ENCODE measurements at regions of chr2 and their contacts with region 1.

Region 1: GRCh38 chr2:73085691-73086360 is 14.3 kb upstream of the SFXN5 start:
- DNase-seq: peak; percentile 81 to 84
- ATAC-seq: peak; percentile 57 to 84 (median 66)
- H3K4me3 ChIP-seq: no peak overlapping the region
- H3K27ac ChIP-seq: no peak overlapping the region
- H3K4me1 ChIP-seq: peaks cover 0 to 54% (median 20%) of the 10 kb centered on the region in 9 donors
- H3K27me3 ChIP-seq: no peaks in the 10 kb centered on the region
- CTCF ChIP-seq: peak; percentile 82 to 98 (median 94)

Region 2: DNA sequence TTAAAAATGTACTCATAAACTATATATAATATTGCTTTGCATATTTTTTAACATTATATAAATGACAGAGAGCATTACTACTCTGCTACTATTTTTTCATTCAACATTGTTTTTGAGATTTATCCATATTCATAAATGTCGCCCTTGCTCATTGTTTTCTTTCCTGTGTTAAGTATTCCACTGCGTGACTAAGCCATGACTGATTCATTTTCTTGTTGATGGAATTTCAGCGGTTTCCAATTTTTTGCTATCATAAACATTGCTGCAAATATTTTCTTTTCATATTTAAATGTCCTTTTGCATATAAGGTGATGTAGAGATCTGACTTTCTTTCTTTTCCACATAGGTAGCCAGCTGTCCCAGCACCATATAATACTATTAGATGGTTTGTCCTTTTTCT is 71.9 kb before region 1 on chr2:
- intact Hi-C with region 1: no loop called
- DNase-seq: no peak
- ATAC-seq: no peak
- H3K4me3 ChIP-seq: no peak overlapping the region
- H3K27ac ChIP-seq: no peak overlapping the region
- H3K4me1 ChIP-seq: peaks cover 0 to 4% (median 0%) of the 10 kb centered on the region in 9 donors
- H3K27me3 ChIP-seq: no peaks in the 10 kb centered on the region
- CTCF ChIP-seq: no peak

Region 3: GRCh38 chr2:73156539-73157124 is 70.8 kb after region 1 on chr2:
- intact Hi-C with region 1: loop called in 9 of 10 experiments (anchors 1 to 5 kb)
- DNase-seq: peak; percentile 52 to 66
- ATAC-seq: peak; percentile 83 to 94 (median 88)
- H3K4me3 ChIP-seq: peak overlapping the region in 1 of 10 donors; percentile 14
- H3K27ac ChIP-seq: no peak overlapping the region
- H3K4me1 ChIP-seq: peaks cover 0 to 8% (median 4%) of the 10 kb centered on the region in 9 donors
- H3K27me3 ChIP-seq: peaks cover 0 to 27% (median 17%) of the 10 kb centered on the region in 7 donors
- CTCF ChIP-seq: peak; percentile 62 to 88 (median 81)

Region 4: DNA sequence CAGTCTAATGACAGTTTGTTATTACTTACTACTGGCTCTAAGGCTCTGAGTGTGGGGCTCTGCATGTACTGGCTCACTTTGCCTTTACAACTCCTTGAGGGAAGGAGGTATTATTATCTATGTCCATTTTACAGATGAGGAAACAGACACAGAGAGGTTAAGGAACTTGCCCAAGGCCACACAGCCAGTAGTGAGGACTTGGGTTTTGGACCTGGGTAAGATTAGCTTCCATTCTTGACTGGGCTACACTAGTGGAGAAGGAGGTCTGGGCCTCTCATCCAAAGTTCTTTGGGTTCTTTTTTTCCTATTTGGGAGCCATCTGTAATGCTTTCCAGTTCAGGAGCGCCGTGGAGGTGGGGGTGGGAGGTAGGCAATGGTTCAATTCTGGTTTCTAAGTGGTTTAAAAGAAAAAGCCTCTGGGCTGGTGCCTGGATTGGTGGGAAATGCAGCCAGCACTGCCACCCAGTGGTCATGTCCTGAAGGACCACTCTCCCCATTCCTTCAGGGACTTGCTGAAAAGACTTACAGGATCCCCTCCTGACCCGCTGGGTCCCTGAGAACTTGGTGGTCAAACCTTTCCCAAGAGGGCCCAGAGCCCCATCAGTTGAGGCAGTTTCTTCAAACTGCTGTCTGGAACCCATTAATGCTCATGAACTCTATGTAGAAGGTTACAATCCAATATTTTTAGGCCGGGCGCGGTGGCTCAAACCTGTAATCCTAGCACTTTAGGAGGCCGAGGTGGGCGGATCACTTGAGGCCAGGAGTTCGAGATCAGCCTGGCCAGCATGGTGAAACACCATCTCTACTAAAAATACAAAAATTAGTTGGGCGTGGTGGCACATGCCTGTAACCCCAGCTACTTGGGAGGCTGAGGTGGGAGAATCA is 77.9 kb after region 1 on chr2:
- intact Hi-C with region 1: loop called in 4 of 10 experiments (anchors 2 to 5 kb)
- DNase-seq: peak; percentile 60 to 66
- ATAC-seq: peak; percentile 58 to 90 (median 83)
- H3K4me3 ChIP-seq: no peak overlapping the region
- H3K27ac ChIP-seq: no peak overlapping the region
- H3K4me1 ChIP-seq: no peaks in the 10 kb centered on the region
- H3K27me3 ChIP-seq: peaks cover 0 to 4% (median 0%) of the 10 kb centered on the region in 7 donors
- CTCF ChIP-seq: peak; percentile 75 to 93 (median 87)

Region 5: DNA sequence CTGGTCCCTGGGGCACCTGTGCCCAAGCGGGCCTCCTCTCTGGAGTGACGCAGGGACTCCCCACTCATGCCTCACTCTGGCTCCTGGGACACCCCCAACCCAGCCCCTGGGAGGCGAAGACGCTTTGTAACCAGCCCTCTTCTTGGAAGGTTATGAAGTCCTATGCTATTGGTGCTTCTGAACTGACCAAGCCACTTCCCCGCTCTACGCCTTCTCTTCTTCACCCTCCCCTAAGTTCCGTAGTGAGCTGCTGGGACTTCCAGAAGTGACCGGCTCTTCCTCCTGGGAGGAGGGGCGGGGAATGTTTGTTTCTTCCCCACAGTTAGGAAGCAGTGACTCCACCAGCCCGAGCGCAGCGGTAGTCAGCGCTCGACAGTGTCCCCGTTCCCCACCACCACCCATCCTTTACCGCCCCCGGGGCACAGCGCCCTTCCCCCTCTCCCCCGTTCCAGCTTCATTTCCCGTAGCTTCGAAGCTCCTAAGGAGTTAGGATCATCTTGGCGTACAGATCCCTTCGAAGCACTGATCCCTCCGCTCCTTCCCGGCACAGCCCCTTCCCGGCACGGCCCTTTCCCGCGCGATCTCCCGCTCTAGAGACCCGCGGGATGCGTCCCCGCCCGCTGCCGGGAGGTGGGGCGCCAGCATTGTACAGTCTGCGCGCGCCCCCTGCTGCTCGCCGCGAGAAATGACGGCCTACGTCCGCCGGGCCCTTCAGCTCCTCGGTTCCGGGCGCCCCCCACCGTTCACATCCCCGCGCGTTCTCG is 91.2 kb after region 1 on chr2:
- intact Hi-C with region 1: loop called in 2 of 10 experiments (anchors 5 kb)
- DNase-seq: peak; percentile 92
- ATAC-seq: peak; percentile 92 to 96 (median 94)
- H3K4me3 ChIP-seq: peak overlapping the region; percentile 26 to 75 (median 60)
- H3K27ac ChIP-seq: peak overlapping the region in 9 of 10 donors; percentile 71 to 89 (median 80)
- H3K4me1 ChIP-seq: peaks cover 4 to 31% (median 25%) of the 10 kb centered on the region in 9 donors
- H3K27me3 ChIP-seq: peaks cover 0 to 61% (median 27%) of the 10 kb centered on the region in 7 donors
- CTCF ChIP-seq: peak; percentile 97 to 99 (median 98)

Region 6: DNA sequence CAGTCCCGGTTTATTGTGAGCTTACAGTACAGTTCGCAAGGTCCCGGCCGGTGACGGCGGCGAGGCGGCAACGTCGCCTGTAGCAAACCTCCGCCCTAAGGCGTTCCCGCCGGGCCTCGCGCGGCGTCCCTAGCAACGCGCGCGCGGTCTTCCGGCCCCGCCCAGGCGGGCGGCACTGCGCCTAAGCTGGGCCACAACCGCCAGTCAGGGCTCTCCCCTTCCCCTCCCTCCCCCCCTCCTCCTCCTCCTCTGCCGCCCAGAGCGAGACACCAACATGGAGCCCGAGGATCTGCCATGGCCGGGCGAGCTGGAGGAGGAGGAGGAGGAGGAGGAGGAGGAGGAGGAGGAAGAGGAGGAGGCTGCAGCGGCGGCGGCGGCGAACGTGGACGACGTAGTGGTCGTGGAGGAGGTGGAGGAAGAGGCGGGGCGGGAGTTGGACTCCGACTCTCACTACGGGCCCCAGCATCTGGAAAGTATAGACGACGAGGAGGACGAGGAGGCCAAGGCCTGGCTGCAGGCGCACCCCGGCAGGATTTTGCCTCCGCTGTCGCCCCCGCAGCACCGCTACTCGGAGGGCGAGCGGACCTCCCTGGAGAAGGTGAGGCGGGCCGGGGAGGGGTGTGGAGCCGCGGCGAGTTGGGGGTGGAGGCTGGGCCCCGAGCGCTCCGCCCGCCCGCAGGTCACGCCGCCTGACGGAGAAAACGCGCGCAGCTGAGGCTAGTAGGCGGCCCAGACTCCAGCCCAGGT is 299.9 kb after region 1 on chr2 and contains the start of gene ALMS1:
- intact Hi-C with region 1: no loop called
- DNase-seq: peak; percentile 88 to 89
- ATAC-seq: peak; percentile 97 to 99 (median 98)
- H3K4me3 ChIP-seq: peak within 1 kb of the TSS; percentile 62 to 92 (median 78)
- H3K27ac ChIP-seq: peak within 1 kb of the TSS; percentile 57 to 93 (median 90)
- H3K4me1 ChIP-seq: peaks cover 4 to 24% (median 17%) of the 10 kb centered on the region in 9 donors
- H3K27me3 ChIP-seq: no peaks in the 10 kb centered on the region
- CTCF ChIP-seq: peak in 7 of 9 donors; percentile 25 to 59 (median 41)
- total RNA-seq, gene ALMS1: 4.7 to 16.9 (median 10.9) TPM